H1 (cell line): ENCODE measurements at regions of chr10 and their contacts with region 1.

Region 1: GRCh38 chr10:97607095-97607636 is 17.6 kb downstream of the C10orf62 start:
- DNase-seq: no peak
- H3K4me3 ChIP-seq: no peak overlapping the region
- H3K27ac ChIP-seq: no peak overlapping the region
- H3K4me1 ChIP-seq: peaks cover 0 to 3% (median 2%) of the 10 kb centered on the region in 4 experiments; a peak in 5 of 7 replicates
- H3K27me3 ChIP-seq: no peaks in the 10 kb centered on the region
- CTCF ChIP-seq: no peak
- EP300 ChIP-seq: no peak
- POLR2A ChIP-seq: no peak
- RAD21 ChIP-seq: no peak

Region 2: DNA sequence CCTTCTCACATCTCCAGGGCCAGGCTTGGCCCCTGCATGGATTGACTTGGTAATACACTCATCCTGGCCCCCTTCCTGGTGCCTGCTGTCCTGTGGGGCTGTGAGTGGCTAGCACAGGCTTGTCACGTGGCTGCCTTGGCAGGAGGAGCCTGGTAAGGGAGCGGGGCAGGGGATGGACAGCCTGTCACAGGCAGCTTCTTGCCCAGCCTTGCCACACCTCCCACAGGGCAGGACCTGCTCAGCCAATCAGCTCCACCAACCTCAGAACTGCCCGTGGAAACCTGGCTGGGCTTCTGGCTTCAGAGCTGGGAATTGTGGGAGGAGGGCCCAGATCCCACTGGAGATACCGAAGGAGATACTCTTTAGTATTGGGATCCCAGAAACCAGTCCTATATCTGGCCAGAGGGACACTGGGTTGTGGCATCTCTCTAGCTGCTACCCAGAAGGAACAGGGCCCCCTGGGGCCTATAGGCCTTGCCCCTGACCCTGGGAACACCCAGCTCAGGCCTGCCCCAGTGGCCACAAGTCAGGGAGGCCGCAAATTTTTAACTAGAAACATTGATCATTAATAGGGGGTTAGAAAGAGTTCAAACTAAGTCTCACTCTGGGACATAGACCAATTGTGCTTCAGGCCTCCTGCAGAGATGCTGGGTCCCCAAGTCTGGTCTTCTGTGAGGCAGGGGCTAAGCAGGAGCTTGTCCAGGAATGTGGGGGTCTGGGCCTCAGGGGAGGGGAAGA is 22.9 kb before region 1 on chr10 and contains the start of gene HOGA1:
- CTCF ChIA-PET with region 1: interaction called, 24 read pairs
- POLR2A ChIA-PET with region 1: no interaction called
- DNase-seq: peak in 1 of 2 experiments; percentile 65
- H3K4me3 ChIP-seq: no peak within 1 kb of the TSS
- H3K27ac ChIP-seq: no peak within 1 kb of the TSS
- H3K4me1 ChIP-seq: peaks cover 0 to 6% (median 2%) of the 10 kb centered on the region in 4 experiments; a peak in 2 of 7 replicates
- H3K27me3 ChIP-seq: no peaks in the 10 kb centered on the region
- CTCF ChIP-seq: no peak
- EP300 ChIP-seq: no peak
- POLR2A ChIP-seq: no peak
- RAD21 ChIP-seq: no peak
- total RNA-seq, gene HOGA1: 0.28 and 0.29 TPM in 2 replicates

Region 3: DNA sequence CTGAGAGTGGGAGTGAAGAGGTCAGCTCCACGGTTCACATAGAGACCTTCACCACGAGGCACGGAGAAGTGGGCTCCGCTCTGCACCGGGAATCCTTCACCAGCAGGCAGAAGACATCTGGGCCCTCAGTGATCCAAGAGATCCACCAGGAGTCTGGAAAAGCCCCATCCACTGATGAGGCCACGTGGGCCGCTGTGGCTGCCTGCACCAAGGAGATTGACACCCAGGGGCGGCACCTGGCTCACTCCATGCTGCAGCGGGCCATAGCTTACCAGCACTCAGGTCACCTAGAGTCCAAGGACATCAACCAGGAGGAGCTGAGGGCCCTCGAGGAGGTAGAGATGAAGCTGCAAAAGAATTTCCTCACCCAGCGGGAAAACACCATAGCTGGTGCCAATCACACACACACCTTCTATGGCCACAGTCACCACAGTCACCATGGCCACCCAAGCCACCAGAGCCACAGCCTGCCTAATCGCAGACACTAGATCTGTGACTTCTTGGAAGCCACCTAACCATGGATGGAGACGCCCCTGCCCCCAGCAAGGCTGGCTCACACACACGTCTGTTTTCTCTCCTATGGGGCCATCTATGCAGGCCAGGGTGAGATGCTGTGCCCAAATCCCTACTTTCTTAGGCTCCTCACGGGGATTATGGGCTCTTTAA is 17.0 kb before region 1 on chr10:
- CTCF ChIA-PET with region 1: interaction called, 24 read pairs
- POLR2A ChIA-PET with region 1: no interaction called
- DNase-seq: no peak
- H3K4me3 ChIP-seq: no peak overlapping the region
- H3K27ac ChIP-seq: no peak overlapping the region
- H3K4me1 ChIP-seq: no peaks in the 10 kb centered on the region
- H3K27me3 ChIP-seq: no peaks in the 10 kb centered on the region
- CTCF ChIP-seq: no peak
- EP300 ChIP-seq: no peak
- POLR2A ChIP-seq: no peak
- RAD21 ChIP-seq: no peak